Sigmoid colon (tissue), 7 donors: ENCODE measurements at regions of chr3 and their contacts with region 1.

Region 1: DNA sequence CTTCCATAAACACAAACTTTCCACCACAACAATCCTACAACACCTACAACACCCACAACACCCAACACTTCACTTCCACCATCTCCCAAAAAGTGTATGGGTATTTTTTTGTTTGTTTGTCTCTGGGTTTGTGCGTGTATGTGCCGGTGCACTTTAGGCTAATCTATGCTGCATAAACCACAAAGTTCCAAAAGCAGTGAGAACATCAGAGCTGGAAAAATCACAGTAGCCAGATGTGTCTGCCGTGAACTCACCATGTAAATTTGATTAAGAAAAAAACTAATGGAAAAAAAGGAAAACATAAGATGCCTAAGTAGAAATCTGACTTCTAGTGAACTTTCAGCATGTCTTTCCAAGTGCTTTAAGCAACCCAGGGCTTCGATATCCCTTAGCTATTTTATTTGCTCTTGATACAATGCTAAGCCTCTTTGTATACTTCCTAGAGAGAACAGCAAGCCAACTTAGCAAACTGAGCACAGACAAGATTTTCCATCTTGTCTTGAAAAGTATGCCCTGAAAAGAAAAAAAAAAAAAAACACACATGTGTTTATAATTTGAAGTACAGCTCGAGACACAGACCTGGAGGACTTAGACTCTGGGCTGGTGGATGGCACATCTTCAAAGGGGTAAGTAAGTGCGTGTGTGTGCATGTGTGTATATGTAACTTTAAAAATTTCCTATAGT is 91.4 kb downstream of the WWTR1 start:
- DNase-seq: no peak
- H3K4me3 ChIP-seq: no peak overlapping the region
- H3K27ac ChIP-seq: peak overlapping the region; percentile 30 to 67 (median 58)
- H3K4me1 ChIP-seq: peaks cover 0 to 53% (median 30%) of the 10 kb centered on the region in 4 donors
- H3K27me3 ChIP-seq: no peaks in the 10 kb centered on the region
- CTCF ChIP-seq: no peak
- EP300 ChIP-seq: no peak
- POLR2A ChIP-seq: no peak

Region 2: GRCh38 chr3:149638228-149639092 is 72.0 kb after region 1 on chr3:
- intact Hi-C with region 1: loop called (anchors 5 kb)
- DNase-seq: no peak
- H3K4me3 ChIP-seq: peak overlapping the region; percentile 9 to 33 (median 29)
- H3K27ac ChIP-seq: peak overlapping the region; percentile 61 to 84 (median 70)
- H3K4me1 ChIP-seq: peaks cover 0 to 82% (median 71%) of the 10 kb centered on the region in 4 donors
- H3K27me3 ChIP-seq: no peaks in the 10 kb centered on the region
- CTCF ChIP-seq: no peak
- EP300 ChIP-seq: no peak
- POLR2A ChIP-seq: no peak

Region 3: DNA sequence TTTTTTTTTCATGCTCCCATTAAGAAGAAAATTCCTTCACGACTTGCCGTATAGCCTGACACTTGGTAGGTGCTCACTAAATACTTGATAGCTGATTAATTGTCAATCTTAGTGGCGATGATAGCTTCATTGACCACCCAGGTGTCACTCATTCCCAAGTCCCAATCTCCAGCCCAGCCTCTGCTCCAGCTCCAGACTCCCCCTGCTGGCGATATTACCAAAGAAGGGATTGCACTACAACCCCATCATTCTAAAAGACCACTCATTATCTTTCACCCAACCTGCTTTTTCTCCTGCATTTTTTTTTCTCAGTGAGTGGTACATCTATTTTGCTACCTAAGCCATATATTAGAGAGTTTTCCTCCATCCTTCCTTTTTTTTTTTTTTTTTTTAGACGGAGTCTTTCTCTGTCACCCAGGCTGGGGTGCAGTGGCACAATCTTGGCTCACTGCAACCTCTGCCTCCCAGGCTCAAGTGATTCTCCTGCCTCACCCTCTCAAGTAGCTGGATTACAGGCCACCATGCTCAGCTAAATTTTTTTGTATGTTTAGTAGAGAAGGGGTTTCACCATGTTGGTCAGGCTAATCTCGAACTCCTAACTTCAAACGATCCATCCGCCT is 205.3 kb after region 1 on chr3:
- intact Hi-C with region 1: no loop called
- DNase-seq: peak; percentile 65
- H3K4me3 ChIP-seq: no peak overlapping the region
- H3K27ac ChIP-seq: no peak overlapping the region
- H3K4me1 ChIP-seq: no peaks in the 10 kb centered on the region
- H3K27me3 ChIP-seq: no peaks in the 10 kb centered on the region
- CTCF ChIP-seq: peak; percentile 36 to 70 (median 64)
- EP300 ChIP-seq: no peak
- POLR2A ChIP-seq: no peak